Activated CD4-positive, alpha-beta memory T cell treated with anti-CD3 and anti-CD28 coated beads for 36 hours (primary cell): ENCODE measurements at regions of chr21 and their contacts with region 1.

Region 1: GRCh38 chr21:36310016-36310415 is 10.0 kb upstream of the MORC3 start:
- DNase-seq: peak; percentile 86
- H3K4me3 Mint-ChIP-seq: peak overlapping the region; percentile 35
- H3K27ac Mint-ChIP-seq: peak overlapping the region; percentile 82
- H3K4me1 Mint-ChIP-seq: peaks cover 6% of the 10 kb centered on the region
- H3K27me3 Mint-ChIP-seq: no peaks in the 10 kb centered on the region

Region 2: DNA sequence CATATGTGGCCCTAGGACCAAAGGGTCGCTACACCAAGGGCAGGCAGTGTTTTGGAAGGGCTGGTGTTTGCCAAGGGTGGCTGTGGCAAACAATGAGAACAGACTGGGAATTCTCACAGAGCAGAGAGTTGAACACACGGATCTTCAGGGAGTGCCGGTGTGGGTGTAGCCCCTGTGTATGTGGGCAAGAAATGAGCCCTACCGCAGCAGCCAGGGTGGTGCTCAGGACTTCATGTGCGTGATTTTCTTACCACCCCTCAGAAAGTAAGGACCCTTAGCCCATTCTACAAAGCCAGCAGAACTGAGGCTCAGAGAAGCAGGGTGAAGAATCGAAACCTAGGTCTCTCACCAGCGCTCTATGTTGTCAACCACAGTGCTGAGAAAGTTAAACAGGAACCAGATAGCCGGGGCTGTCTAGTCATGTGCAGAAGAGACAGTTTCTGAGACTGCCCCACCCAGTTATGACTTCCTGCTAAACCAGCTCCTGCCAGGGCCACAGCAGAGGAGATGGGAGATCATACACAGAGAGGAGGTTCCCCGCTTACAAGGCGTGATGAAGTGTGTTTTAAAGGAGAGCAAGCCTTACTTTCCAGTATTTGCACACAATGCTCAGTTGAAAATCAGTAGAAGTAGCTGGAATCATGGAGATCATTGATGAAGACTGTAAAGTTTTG is 12.0 kb before region 1 on chr21:
- CTCF ChIA-PET with region 1: interaction called, 6 read pairs
- POLR2A ChIA-PET with region 1: interaction called, 17 read pairs
- intact Hi-C with region 1: loop called (anchors 1 kb)
- DNase-seq: peak; percentile 81
- H3K4me3 Mint-ChIP-seq: peak overlapping the region; percentile 60
- H3K27ac Mint-ChIP-seq: peak overlapping the region; percentile 90
- H3K4me1 Mint-ChIP-seq: peaks cover 46% of the 10 kb centered on the region
- H3K27me3 Mint-ChIP-seq: no peaks in the 10 kb centered on the region